A673 (cell line): ENCODE measurements at regions of chr14 and their contacts with region 1.

Region 1: DNA sequence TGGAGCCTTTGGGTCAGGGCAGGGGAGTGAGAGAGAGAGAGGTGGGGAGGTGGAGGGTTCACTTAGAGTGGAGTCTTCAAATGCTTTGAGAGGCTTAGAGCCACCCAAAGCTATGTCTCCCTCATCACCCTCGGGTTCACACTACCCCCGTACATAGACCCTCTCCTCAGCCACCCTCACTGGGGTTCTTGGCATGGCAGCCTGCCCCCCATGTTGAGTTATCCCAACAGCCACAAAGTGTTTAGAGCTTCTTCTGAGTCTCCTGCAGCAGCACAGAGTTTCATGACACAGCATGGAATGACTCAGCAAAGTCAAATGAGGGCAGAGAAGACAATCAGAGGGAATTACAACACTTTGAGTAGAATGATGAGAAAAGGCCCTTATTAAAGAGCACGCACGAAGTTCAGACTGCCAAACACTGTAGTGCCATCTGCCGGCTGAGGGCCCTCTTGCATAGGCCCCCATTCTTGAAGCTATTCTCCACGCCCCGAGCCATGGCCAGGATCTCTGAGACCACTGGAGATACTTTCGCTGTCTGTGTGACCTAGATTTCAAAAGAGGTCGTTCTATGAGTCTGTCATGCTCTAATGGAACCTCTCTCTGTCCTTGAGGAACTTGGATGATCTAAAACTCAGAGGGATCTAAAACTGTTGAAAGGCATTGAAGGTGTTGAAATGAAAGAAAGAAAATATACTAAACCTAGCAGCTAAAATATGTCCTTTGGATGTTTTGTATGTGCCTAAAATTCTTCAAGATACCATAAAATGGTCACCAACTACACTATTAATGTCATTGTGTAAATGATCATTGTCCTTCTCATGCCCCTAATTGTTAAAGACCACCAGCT is 221.9 kb downstream of the PELI2 start:
- DNase-seq: peak; percentile 93
- H3K4me3 ChIP-seq: no peak overlapping the region
- H3K27ac ChIP-seq: no peak overlapping the region
- H3K4me1 ChIP-seq: peaks cover 21% of the 10 kb centered on the region
- H3K27me3 ChIP-seq: no peaks in the 10 kb centered on the region
- CTCF ChIP-seq: peak; percentile 95

Region 2: DNA sequence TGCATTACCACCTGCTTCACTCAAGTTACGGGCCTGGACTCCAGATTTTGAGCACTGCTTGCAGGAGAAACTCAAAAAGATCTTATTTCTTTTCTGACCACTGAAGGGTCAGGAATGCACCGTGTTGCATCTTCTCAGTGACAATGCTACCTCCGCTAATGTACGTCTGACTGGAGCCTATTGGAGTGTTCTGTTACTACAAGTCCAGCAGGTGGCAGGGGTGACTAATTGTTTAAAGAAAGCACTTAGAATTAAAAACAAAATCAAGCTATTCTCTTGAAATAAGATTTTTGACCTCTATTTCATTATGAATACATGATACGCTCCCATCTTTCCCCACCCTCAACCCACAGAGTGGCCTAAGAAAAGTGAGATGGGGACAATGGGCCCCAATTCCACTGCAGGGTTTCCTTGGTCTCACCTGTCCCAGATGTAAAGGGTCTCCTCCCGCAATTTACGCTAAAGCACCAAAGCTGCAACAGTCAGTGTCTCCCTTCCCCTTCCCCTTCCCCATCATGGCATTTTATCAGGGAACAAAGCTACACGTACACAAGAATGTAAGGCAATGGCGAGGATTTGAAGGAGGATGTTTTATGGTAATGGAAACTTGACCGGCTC is 901.9 kb before region 1 on chr14:
- CTCF ChIA-PET with region 1: interaction called, 3 read pairs
- POLR2A ChIA-PET with region 1: no interaction called
- intact Hi-C with region 1: loop called (anchors 5 kb)
- DNase-seq: peak; percentile 77
- H3K4me3 ChIP-seq: no peak overlapping the region
- H3K27ac ChIP-seq: no peak overlapping the region
- H3K4me1 ChIP-seq: no peaks in the 10 kb centered on the region
- H3K27me3 ChIP-seq: no peaks in the 10 kb centered on the region
- CTCF ChIP-seq: peak; percentile 65

Region 3: GRCh38 chr14:55731881-55732498 is 608.1 kb before region 1 on chr14:
- CTCF ChIA-PET with region 1: interaction called, 4 read pairs
- POLR2A ChIA-PET with region 1: no interaction called
- intact Hi-C with region 1: loop called (anchors 5 kb)
- DNase-seq: peak; percentile 63
- H3K4me3 ChIP-seq: no peak overlapping the region
- H3K27ac ChIP-seq: no peak overlapping the region
- H3K4me1 ChIP-seq: no peaks in the 10 kb centered on the region
- H3K27me3 ChIP-seq: no peaks in the 10 kb centered on the region
- CTCF ChIP-seq: peak; percentile 87

Region 4: GRCh38 chr14:55986069-55986468 is 354.0 kb before region 1 on chr14:
- CTCF ChIA-PET with region 1: no interaction called
- POLR2A ChIA-PET with region 1: no interaction called
- intact Hi-C with region 1: no loop called
- DNase-seq: no peak
- H3K4me3 ChIP-seq: no peak overlapping the region
- H3K27ac ChIP-seq: no peak overlapping the region
- H3K4me1 ChIP-seq: no peaks in the 10 kb centered on the region
- H3K27me3 ChIP-seq: no peaks in the 10 kb centered on the region
- CTCF ChIP-seq: no peak

Region 5: DNA sequence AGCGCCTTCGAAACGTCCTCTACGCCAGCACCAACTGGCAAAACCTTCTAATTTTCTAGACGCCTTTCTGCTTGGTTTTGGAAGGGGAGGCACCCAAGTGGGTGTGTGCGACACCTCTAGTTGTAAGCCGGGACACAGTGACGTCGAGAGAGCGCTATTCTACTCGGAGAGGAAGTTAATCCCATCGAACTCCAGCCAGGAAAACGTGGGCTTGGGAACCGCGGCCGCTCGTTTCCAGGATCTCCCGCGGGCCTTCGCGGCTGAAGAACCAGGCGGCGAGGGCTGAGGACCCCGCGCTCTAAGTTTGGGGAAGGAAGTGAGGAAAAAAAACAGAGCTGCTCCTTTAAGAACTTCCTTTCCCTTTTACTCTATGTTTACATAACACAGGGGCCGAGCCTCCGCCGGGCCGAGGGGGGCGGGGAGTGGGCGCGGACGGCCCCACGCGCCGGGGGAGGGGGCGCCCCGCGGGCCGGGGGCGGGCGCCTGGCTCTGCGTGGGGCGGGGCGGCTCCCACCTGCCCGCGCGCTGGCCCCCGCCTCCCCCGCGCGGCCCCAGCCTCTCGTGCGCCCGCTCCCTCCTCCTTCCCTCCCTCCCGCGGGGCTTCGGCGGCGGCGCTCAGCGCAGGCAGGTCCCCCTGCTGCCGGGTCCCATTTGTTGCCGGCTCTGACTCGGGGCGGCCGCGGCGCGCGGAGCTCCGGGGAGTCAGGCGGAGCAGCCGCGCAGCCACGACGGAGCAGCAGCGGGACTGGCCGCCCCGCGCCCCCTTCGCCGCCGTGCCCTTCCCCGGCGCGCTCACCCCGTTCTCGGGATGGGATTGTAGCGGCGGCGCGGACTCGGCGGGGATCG is 222.1 kb before region 1 on chr14 and contains the start of gene PELI2:
- CTCF ChIA-PET with region 1: no interaction called
- POLR2A ChIA-PET with region 1: no interaction called
- intact Hi-C with region 1: loop called (anchors 10 kb)
- DNase-seq: peak; percentile 86
- H3K4me3 ChIP-seq: peak within 1 kb of the TSS; percentile 86
- H3K27ac ChIP-seq: peak within 1 kb of the TSS; percentile 69
- H3K4me1 ChIP-seq: peaks cover 12% of the 10 kb centered on the region
- H3K27me3 ChIP-seq: peaks cover 37% of the 10 kb centered on the region
- CTCF ChIP-seq: no peak
- total RNA-seq, gene PELI2: 5.5 and 8.1 TPM in 2 replicates

Region 6: GRCh38 chr14:56386024-56386423 is 45.9 kb after region 1 on chr14:
- CTCF ChIA-PET with region 1: no interaction called
- POLR2A ChIA-PET with region 1: no interaction called
- intact Hi-C with region 1: no loop called
- DNase-seq: no peak
- H3K4me3 ChIP-seq: no peak overlapping the region
- H3K27ac ChIP-seq: no peak overlapping the region
- H3K4me1 ChIP-seq: no peaks in the 10 kb centered on the region
- H3K27me3 ChIP-seq: no peaks in the 10 kb centered on the region
- CTCF ChIP-seq: no peak

Region 7: DNA sequence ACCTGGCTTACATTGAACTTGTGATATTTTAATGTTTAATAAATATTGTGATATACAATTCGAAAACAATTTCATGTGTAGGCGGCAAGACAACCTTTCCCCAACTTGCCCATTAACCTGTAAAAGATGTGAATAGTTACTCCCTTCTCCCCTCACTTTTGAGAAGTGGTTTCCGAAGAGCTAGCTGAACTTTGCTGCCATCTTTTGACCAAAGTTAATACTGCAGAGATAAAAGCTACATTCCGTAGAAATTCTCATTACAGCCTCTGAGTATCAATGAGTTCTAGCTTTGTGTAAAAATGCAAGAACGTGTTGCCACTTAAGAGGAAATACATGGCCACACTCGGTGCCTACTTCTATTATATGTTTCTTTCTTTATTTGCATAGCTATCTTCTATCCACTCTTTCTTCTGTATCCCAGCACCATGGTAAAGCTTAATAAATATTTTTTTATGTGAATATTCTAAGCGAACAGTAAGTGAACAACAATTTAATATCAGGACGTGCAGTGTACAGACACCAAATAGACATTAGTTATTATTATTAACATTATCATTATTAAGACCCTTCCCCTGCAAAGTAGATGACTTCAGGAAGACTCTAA is 134.4 kb after region 1 on chr14:
- CTCF ChIA-PET with region 1: interaction called, 4 read pairs
- POLR2A ChIA-PET with region 1: interaction called, 4 read pairs
- intact Hi-C with region 1: loop called (anchors 5 kb)
- DNase-seq: peak; percentile 74
- H3K4me3 ChIP-seq: no peak overlapping the region
- H3K27ac ChIP-seq: no peak overlapping the region
- H3K4me1 ChIP-seq: no peaks in the 10 kb centered on the region
- H3K27me3 ChIP-seq: no peaks in the 10 kb centered on the region
- CTCF ChIP-seq: peak; percentile 87